ENCODE measurements at regions of chr4 and their contacts with region 1.

Region 1: DNA sequence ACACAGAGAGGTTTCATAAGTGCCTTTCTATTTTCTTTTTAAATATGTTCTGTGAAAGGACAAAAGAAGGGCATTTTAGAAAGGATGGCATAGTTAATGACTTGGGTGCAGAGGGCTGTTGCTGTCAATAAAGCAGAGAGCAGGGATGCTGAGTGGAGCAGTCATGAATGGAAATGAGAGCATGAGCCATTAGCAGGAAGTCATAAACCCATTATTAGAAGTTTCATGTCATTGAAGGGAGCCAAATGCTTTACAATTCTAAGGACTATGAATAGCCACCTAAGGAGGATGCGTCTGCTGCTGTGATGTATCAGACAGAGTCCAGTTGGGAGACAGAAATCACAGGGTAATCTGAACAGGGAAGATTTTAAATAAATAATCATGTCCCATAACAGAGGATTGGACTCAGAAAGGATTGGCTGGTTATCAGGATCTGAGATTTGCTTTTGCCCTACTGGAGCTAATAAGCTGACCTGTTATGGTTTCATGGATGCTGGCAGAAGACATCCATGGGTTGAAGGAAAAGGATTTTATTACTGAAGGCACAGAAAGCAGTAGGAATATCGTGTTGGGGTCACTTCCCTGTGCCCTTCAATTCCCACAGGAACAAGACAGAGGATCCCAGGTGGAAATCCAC is 47.5 kb upstream of the WDR19 start:
- DNase-seq: no peak
- H3K4me3 ChIP-seq: no peak overlapping the region
- H3K4me3 Mint-ChIP-seq: no peak overlapping the region
- H3K27ac ChIP-seq: no peak overlapping the region
- H3K27ac Mint-ChIP-seq: no peak overlapping the region
- H3K4me1 ChIP-seq: peaks cover 3 to 5% of the 10 kb centered on the region in 2 donors
- H3K4me1 Mint-ChIP-seq: peaks cover 8% of the 10 kb centered on the region
- H3K27me3 ChIP-seq: no peaks in the 10 kb centered on the region
- H3K27me3 Mint-ChIP-seq: peaks cover 0 to 3% (median 2%) of the 10 kb centered on the region in 3 donors
- CTCF ChIP-seq: no peak

Region 2: DNA sequence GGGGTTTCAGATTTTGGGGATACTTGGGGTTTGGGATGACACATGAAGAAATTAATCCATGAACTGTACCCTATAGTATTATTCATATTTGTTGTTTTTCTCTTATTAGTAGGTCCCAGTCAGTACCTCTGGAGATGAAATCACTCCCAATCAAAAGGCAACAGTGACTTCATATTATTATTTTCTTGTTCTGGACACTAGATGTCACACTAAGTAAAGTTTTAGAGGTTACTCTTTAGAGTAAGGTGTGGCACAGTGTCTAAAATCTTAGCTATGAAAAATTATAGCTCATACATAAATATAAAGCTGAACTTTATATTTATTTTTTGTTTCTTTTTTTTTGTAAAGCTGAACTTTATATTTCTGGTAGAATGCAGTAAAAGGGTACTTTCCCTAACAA is 232.1 kb before region 1 on chr4:
- intact Hi-C with region 1: loop called (anchors 1 to 5 kb)
- DNase-seq: peak in 1 of 3 donors; percentile 31
- H3K4me3 ChIP-seq: no peak overlapping the region
- H3K4me3 Mint-ChIP-seq: no peak overlapping the region
- H3K27ac ChIP-seq: no peak overlapping the region
- H3K27ac Mint-ChIP-seq: no peak overlapping the region
- H3K4me1 ChIP-seq: no peaks in the 10 kb centered on the region
- H3K4me1 Mint-ChIP-seq: no peaks in the 10 kb centered on the region
- H3K27me3 ChIP-seq: no peaks in the 10 kb centered on the region
- H3K27me3 Mint-ChIP-seq: no peaks in the 10 kb centered on the region
- CTCF ChIP-seq: peak; percentile 44

Measured in CD14-positive monocyte (primary cell).